Spleen (tissue), 13 donors: ENCODE measurements at regions of chr20 and their contacts with region 1.

Region 1: GRCh38 chr20:57383447-57384347 is 7.5 kb upstream of the RBM38 start:
- DNase-seq: peak; percentile 46
- H3K4me3 ChIP-seq: no peak overlapping the region
- H3K27ac ChIP-seq: peak overlapping the region in 4 of 8 donors; percentile 41 to 77 (median 46)
- H3K4me1 ChIP-seq: peaks cover 4 to 61% (median 32%) of the 10 kb centered on the region in 6 donors
- H3K27me3 ChIP-seq: no peaks in the 10 kb centered on the region
- CTCF ChIP-seq: no peak
- POLR2A ChIP-seq: no peak

Region 2: DNA sequence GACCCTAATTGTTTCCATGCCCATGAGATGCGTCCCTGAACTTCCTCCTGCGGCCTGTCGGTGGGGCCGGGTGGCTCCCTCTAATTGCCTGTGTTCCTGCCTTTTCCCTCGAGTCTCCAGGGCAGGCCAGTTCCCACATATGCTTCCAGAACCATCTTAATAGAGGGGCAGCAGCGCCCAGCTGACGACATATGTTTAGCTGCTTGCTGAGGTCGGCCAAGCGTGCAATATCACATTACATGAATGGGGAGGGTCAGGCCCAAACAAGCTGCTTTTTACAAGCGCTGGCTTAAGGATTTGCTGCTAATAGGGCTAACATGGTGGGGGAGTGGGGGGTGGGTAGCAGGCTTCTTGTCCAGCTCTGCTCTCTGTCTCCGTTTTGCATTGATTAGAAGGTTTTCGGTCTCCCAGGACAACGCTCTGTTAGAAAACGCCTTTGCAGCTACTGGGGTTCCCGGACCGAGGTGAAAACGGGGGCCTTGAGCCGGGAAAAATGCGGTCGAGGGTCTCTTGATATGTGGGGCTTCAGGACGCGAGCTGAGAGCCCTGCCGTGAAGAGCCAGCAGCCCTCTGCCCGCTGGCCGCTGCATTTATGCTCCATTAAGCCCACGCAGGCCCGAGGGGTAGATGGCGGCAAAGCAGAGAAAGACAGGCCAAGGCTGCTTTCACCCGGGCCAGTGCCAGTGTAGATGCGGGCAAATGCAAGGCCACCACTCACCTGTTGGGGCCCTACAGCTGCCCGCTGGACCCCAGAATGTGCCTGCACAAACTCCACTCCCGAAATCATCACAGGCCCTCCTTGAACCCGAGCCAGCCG is 425.8 kb before region 1 on chr20:
- intact Hi-C with region 1: no loop called
- DNase-seq: no peak
- H3K4me3 ChIP-seq: no peak overlapping the region
- H3K27ac ChIP-seq: no peak overlapping the region
- H3K4me1 ChIP-seq: peaks cover 0 to 5% (median 0%) of the 10 kb centered on the region in 6 donors
- H3K27me3 ChIP-seq: peaks cover 0 to 89% (median 27%) of the 10 kb centered on the region in 7 donors
- CTCF ChIP-seq: no peak
- POLR2A ChIP-seq: no peak

Region 3: GRCh38 chr20:57495985-57496384 is 112.3 kb after region 1 on chr20:
- intact Hi-C with region 1: loop called (anchors 2 kb)
- DNase-seq: no peak
- H3K4me3 ChIP-seq: no peak overlapping the region
- H3K27ac ChIP-seq: no peak overlapping the region
- H3K4me1 ChIP-seq: peaks cover 8 to 47% (median 25%) of the 10 kb centered on the region in 6 donors
- H3K27me3 ChIP-seq: peaks cover 0 to 20% (median 0%) of the 10 kb centered on the region in 7 donors
- CTCF ChIP-seq: no peak
- POLR2A ChIP-seq: no peak

Region 4: DNA sequence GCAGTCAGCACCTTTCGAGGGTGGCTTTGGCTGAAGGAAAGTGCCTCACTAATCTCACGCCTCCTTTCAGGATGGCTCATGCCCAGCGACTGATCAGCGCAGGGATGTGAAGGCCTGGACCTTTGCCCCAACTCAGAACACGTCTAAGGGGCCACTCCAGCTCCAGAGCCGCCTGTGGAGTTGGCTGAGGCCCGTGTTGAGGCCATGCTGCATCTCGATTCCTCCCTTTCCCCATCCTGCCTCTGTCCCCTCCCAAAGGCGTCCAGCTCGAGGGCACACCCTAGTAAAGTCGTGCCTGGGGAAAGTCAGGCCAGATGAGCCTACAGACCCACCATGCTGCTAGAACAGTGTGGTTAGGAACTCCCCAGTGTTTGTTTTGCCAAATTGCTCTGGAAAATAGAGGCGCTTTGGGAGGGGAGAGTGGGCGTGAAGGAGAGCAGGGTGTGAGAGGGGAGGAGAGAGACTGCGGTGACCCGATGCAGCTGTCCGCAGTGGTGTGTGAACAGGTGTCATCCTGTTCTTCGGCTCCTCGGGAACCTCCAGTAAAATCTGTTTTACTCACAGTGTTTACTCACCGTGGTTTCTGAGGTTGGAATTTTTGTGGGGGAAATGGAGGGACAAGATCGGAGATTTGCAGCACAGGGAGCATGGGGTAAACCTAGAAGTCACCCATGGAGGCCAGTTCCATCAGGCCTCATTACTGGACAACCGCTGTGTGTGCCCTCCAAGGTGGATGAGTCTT is 411.1 kb after region 1 on chr20:
- intact Hi-C with region 1: no loop called
- DNase-seq: peak; percentile 54
- H3K4me3 ChIP-seq: no peak overlapping the region
- H3K27ac ChIP-seq: no peak overlapping the region
- H3K4me1 ChIP-seq: peaks cover 0 to 18% (median 2%) of the 10 kb centered on the region in 6 donors
- H3K27me3 ChIP-seq: no peaks in the 10 kb centered on the region
- CTCF ChIP-seq: no peak
- POLR2A ChIP-seq: no peak